ENCODE measurements at regions of chr18 and their contacts with region 1.

Region 1: GRCh38 chr18:28115149-28115550 is 61.8 kb downstream of the CDH2 start:
- DNase-seq: peak; percentile 90
- ATAC-seq: peak; percentile 37
- H3K4me3 ChIP-seq: peak overlapping the region; percentile 58
- H3K27ac ChIP-seq: peak overlapping the region; percentile 92
- H3K4me1 ChIP-seq: peaks cover 65% of the 10 kb centered on the region
- H3K27me3 ChIP-seq: no peaks in the 10 kb centered on the region
- CTCF ChIP-seq: no peak

Region 2: DNA sequence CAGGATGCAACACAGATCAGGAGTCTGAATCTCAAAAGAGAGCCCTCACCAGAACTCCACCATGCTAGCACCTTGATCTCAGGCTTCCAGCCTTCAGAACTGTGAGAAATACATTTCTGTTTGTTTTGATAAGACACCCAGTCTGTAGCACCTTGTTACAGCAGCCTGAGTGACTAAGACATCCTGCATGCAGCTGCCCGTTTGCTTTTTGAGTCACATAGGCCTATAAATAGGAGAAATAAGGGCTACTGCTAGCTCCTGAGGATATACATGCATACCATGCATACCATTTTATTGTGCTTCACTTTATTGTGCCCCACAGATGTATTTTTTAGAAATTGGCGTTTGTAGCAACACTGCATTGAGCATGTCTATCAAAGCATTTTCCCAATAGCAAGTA is 276.0 kb before region 1 on chr18:
- CTCF ChIA-PET with region 1: no interaction called
- POLR2A ChIA-PET with region 1: no interaction called
- intact Hi-C with region 1: loop called (anchors 5 kb)
- DNase-seq: peak; percentile 96
- ATAC-seq: peak; percentile 94
- H3K4me3 ChIP-seq: no peak overlapping the region
- H3K27ac ChIP-seq: peak overlapping the region; percentile 72
- H3K4me1 ChIP-seq: peaks cover 60% of the 10 kb centered on the region
- H3K27me3 ChIP-seq: no peaks in the 10 kb centered on the region
- CTCF ChIP-seq: no peak

Region 3: DNA sequence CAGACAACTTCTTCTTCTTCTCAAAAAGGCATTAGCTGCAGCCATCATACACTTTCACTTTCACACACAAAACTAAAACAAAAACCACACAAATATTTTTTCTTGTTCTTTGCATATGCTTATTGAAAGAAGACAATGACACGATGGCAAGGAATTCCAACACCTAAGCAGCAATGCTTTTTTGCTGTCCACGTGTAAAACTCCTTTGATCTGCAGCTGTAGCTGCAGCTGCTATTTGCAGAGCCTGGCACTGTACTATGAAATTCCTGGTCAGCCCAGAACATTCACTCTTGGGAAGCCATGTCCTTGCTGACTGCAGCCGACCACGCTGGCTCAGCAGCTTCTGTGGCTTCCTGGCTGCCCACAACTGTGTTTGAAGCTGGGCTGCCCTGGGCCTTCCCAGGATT is 254.4 kb before region 1 on chr18:
- CTCF ChIA-PET with region 1: no interaction called
- POLR2A ChIA-PET with region 1: no interaction called
- intact Hi-C with region 1: no loop called
- DNase-seq: no peak
- ATAC-seq: no peak
- H3K4me3 ChIP-seq: no peak overlapping the region
- H3K27ac ChIP-seq: no peak overlapping the region
- H3K4me1 ChIP-seq: no peaks in the 10 kb centered on the region
- H3K27me3 ChIP-seq: no peaks in the 10 kb centered on the region
- CTCF ChIP-seq: no peak

Region 4: GRCh38 chr18:27921904-27922739 is 193.0 kb before region 1 on chr18:
- CTCF ChIA-PET with region 1: no interaction called
- POLR2A ChIA-PET with region 1: no interaction called
- intact Hi-C with region 1: loop called (anchors 10 kb)
- DNase-seq: peak; percentile 94
- ATAC-seq: peak; percentile 100
- H3K4me3 ChIP-seq: peak overlapping the region; percentile 66
- H3K27ac ChIP-seq: peak overlapping the region; percentile 83
- H3K4me1 ChIP-seq: peaks cover 25% of the 10 kb centered on the region
- H3K27me3 ChIP-seq: no peaks in the 10 kb centered on the region
- CTCF ChIP-seq: no peak

Region 5: DNA sequence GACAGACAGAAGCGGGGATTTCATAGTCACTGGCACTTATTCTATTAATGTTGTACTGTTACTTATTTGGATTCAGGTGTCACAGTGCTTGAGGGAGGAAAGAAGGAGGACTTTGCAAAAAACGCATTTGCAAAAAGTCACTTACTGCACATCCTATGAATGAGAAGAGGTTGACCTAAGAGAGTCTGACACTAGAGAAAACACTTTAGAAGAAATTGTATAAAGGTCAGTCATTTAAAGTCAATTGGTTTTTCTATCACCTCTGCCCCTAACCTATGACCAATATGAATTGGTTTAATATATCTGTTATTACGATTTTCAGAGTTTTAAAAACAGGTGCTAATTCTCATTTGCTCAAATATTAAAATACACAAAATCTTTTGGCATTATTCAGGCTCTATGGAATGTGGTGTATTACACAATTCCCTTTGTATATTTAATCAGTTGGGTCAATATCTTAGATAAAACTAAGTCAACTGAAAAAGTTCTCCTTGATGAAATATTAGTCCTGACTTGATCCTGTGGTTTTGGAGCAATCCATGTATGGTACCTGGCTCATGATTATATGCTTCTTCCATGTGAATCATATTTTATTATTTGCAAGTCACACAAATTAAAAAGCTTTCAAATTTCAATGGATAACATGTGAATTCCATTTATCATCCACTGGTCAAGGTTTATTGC is 95.6 kb before region 1 on chr18:
- CTCF ChIA-PET with region 1: no interaction called
- POLR2A ChIA-PET with region 1: no interaction called
- intact Hi-C with region 1: loop called (anchors 2 kb)
- DNase-seq: peak; percentile 87
- ATAC-seq: peak; percentile 96
- H3K4me3 ChIP-seq: no peak overlapping the region
- H3K27ac ChIP-seq: no peak overlapping the region
- H3K4me1 ChIP-seq: peaks cover 25% of the 10 kb centered on the region
- H3K27me3 ChIP-seq: no peaks in the 10 kb centered on the region
- CTCF ChIP-seq: no peak

Region 6: GRCh38 chr18:28095041-28095440 is 20.1 kb before region 1 on chr18:
- CTCF ChIA-PET with region 1: no interaction called
- POLR2A ChIA-PET with region 1: no interaction called
- intact Hi-C with region 1: no loop called
- DNase-seq: peak; percentile 29
- ATAC-seq: no peak
- H3K4me3 ChIP-seq: no peak overlapping the region
- H3K27ac ChIP-seq: no peak overlapping the region
- H3K4me1 ChIP-seq: no peaks in the 10 kb centered on the region
- H3K27me3 ChIP-seq: no peaks in the 10 kb centered on the region
- CTCF ChIP-seq: no peak

Region 7: GRCh38 chr18:29154758-29155725 is 1039.9 kb after region 1 on chr18:
- CTCF ChIA-PET with region 1: no interaction called
- POLR2A ChIA-PET with region 1: no interaction called
- intact Hi-C with region 1: loop called (anchors 5 kb)
- DNase-seq: peak; percentile 97
- ATAC-seq: peak; percentile 68
- H3K4me3 ChIP-seq: peak overlapping the region; percentile 47
- H3K27ac ChIP-seq: peak overlapping the region; percentile 95
- H3K4me1 ChIP-seq: peaks cover 49% of the 10 kb centered on the region
- H3K27me3 ChIP-seq: no peaks in the 10 kb centered on the region
- CTCF ChIP-seq: no peak

Measured in PC-3 (cell line).